Colonic mucosa (tissue), 4 donors: ENCODE measurements at regions of chr5 and their contacts with region 1.

Region 1: DNA sequence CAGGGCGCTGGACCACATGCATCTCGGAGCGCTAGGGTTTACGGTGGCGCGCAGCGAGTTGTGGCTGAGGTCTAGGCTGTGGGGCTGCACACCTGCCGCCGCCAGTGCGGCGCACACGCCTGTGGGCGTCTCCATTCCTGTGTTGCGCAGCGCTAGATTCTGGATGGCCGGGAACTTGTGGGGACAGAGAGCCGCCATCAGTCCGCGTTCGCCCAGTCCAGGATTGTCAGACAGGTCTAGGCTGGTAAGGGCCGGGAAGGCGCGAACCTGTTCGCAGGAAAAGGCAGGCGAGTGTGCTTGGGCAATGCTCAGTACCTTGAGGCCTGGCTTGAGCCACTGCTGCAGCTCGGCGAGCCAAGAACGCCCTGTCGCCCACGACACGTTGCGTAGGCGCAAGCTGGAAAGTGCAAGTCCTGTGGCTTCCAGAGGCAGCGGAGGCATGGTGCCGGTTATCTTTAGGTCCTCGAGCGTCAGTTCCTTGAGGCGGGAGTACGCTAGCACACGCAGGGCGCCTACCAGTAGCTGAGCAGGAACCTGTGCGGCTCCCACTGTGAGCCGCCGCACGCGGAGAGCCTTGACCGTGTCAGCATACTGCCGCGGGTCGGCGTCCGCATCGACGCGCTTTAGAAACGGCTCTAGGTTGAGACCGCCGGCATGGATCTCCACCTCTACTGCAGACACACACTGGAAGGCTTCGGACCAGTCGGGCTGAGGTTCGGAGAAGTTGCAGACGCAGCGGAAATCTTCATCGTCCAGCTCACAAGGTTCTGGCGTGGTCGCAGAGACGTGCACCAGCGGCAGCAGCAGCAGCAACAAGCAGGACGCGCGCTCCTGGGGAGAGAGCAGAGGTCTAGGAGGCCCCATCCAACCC is 590 bp downstream of the CD14 start:
- DNase-seq: peak; percentile 70
- H3K4me3 ChIP-seq: peak overlapping the region; percentile 47
- H3K27ac ChIP-seq: peak overlapping the region; percentile 69
- H3K4me1 ChIP-seq: peaks cover 4% of the 10 kb centered on the region
- H3K27me3 ChIP-seq: no peaks in the 10 kb centered on the region
- CTCF ChIP-seq: no peak

Region 2: GRCh38 chr5:140564196-140565023 is 68.0 kb before region 1 on chr5 and contains the starts of genes APBB3 and SLC35A4:
- intact Hi-C with region 1: loop called (anchors 5 kb)
- DNase-seq: peak; percentile 97
- H3K4me3 ChIP-seq: peak within 1 kb of the TSS; percentile 72
- H3K27ac ChIP-seq: peak within 1 kb of the TSS; percentile 90
- H3K4me1 ChIP-seq: peaks cover 13% of the 10 kb centered on the region
- H3K27me3 ChIP-seq: no peaks in the 10 kb centered on the region
- CTCF ChIP-seq: no peak
- total RNA-seq, gene APBB3: 11.0 to 17.0 TPM
- total RNA-seq, gene SLC35A4: 78.1 to 129 TPM

Region 3: DNA sequence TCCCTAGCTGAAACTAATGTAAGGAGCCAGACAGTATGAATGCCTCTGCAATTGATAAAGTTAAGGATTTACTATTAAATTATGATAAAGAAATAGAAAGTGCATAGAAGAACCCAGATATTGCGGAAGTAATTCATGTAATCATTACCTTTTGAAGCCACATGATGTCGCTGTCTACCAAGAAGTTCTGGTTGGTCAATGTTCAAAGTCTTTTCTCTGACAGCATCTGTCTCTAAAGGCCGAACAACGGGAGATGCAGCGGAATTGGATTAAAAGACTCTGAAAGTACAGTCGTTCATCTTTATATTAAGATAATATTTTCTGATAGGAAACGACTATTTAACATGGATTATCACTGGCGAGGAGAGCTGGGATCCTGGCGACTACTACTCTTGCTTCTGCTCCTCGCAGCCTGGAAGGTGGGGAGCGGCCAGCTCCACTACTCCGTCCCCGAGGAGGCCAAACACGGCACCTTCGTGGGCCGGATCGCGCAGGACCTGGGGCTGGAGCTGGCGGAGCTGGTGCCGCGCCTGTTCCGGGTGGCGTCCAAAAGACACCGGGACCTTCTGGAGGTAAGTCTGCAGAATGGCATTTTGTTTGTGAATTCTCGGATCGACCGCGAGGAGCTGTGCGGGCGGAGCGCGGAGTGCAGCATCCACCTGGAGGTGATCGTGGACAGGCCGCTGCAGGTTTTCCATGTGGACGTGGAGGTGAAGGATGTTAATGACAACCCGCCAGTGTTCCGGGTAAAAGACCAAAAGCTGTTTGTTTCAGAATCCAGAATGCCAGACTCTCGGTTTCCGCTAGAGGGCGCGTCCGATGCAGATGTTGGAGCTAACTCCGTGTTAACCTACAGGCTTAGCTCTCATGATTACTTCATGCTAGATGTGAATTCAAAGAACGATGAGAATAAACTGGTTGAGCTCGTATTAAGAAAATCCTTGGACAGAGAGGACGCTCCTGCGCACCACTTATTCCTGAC is 208.9 kb after region 1 on chr5 and contains the start of gene PCDHA8:
- intact Hi-C with region 1: no loop called
- DNase-seq: no peak
- H3K4me3 ChIP-seq: no peak within 1 kb of the TSS
- H3K27ac ChIP-seq: no peak within 1 kb of the TSS
- H3K4me1 ChIP-seq: no peaks in the 10 kb centered on the region
- H3K27me3 ChIP-seq: no peaks in the 10 kb centered on the region
- CTCF ChIP-seq: no peak
- total RNA-seq, gene PCDHA8: 0.10 TPM in 1 of 2 donors, not detected in the other